Aorta (tissue), 5 donors: ENCODE measurements at regions of chr1 and their contacts with region 1.

Region 1: GRCh38 chr1:25247024-25247828 is at the start of gene RSRP1:
- DNase-seq: peak; percentile 100
- ATAC-seq: peak; percentile 98
- H3K4me3 ChIP-seq: peak within 1 kb of the TSS; percentile 21 to 74
- H3K27ac ChIP-seq: peak within 1 kb of the TSS; percentile 76 to 86
- H3K4me1 ChIP-seq: no peaks in the 10 kb centered on the region
- H3K27me3 ChIP-seq: no peaks in the 10 kb centered on the region
- total RNA-seq, gene RSRP1: 103 to 172 TPM

Region 2: GRCh38 chr1:24987875-24988557 is 259.2 kb before region 1 on chr1:
- intact Hi-C with region 1: no loop called
- DNase-seq: peak in 1 of 2 donors; percentile 25
- ATAC-seq: no peak
- H3K4me3 ChIP-seq: no peak overlapping the region
- H3K27ac ChIP-seq: no peak overlapping the region
- H3K4me1 ChIP-seq: no peaks in the 10 kb centered on the region
- H3K27me3 ChIP-seq: no peaks in the 10 kb centered on the region

Region 3: GRCh38 chr1:25338188-25338981 is 91.2 kb after region 1 on chr1 and contains the start of gene TMEM50A:
- intact Hi-C with region 1: loop called in 1 of 2 experiments (anchors 2 kb)
- DNase-seq: peak; percentile 93 to 96
- ATAC-seq: peak; percentile 99
- H3K4me3 ChIP-seq: peak within 1 kb of the TSS; percentile 79 to 88
- H3K27ac ChIP-seq: peak within 1 kb of the TSS; percentile 85 to 96
- H3K4me1 ChIP-seq: peaks cover 0 to 2% of the 10 kb centered on the region in 2 donors
- H3K27me3 ChIP-seq: no peaks in the 10 kb centered on the region
- total RNA-seq, gene TMEM50A: 114 to 115 TPM

Region 4: DNA sequence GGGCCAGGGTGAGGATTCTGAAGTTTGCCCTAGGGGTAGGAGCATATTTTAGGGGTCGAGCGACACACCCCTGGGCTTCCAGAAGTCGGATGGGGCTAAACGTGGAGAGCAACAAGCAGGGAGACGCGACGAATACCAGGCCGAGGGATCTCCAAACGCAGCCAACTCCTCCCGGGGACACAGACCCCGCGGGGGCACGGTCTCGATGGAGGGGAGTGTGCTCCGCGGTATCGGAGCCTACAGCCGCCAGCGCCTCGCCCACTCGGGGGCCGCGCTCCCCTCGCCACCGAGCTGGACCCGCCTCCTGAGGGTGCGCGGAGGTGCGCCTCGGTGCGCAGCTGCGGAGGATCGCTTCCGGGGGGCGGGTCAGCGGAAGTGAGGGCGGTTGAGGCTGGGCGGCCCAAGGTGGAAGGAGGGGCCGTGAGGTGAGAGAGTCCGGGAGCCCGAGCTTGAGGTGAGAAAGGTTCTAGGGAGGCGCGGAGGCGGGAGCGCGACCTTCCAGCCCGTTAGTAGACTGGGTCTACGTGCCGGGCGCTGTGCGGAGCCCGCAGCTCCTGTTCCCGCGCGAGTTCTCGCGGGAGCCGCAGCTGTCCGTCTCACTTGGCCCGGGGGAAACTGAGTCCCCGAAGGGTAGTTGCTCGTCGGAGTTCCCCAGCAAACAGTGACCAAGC is 572.5 kb after region 1 on chr1 and contains the start of gene MTFR1L:
- intact Hi-C with region 1: loop called in 1 of 2 experiments (anchors 5 kb)
- DNase-seq: peak; percentile 93 to 96
- ATAC-seq: peak; percentile 94
- H3K4me3 ChIP-seq: peak within 1 kb of the TSS; percentile 77 to 88
- H3K27ac ChIP-seq: peak within 1 kb of the TSS in 1 of 2 donors; percentile 80
- H3K4me1 ChIP-seq: no peaks in the 10 kb centered on the region
- H3K27me3 ChIP-seq: no peaks in the 10 kb centered on the region
- total RNA-seq, gene MTFR1L: 54.0 to 59.6 TPM